ENCODE measurements at regions of chr12 and their contacts with region 1.

Region 1: GRCh38 chr12:15856097-15856982 is 25.8 kb upstream of the STRAP start:
- DNase-seq: peak; percentile 40
- ATAC-seq: peak; percentile 84
- H3K4me3 ChIP-seq: no peak overlapping the region
- H3K27ac ChIP-seq: no peak overlapping the region
- H3K4me1 ChIP-seq: no peaks in the 10 kb centered on the region
- H3K27me3 ChIP-seq: no peaks in the 10 kb centered on the region
- CTCF ChIP-seq: peak; percentile 59 to 82 (median 60); a peak in 4 of 6 replicates
- EP300 ChIP-seq: no peak
- POLR2A ChIP-seq: no peak
- RAD21 ChIP-seq: peak; percentile 98

Region 2: GRCh38 chr12:15276088-15276698 is 580.1 kb before region 1 on chr12:
- CTCF ChIA-PET with region 1: interaction called, 4 read pairs
- POLR2A ChIA-PET with region 1: no interaction called
- RAD21 ChIA-PET with region 1: interaction called, 3 read pairs
- SMC1A ChIA-PET with region 1: interaction called, 3 read pairs
- in situ Hi-C with region 1: loop called (anchors 10 kb)
- intact Hi-C with region 1: loop called (anchors 5 kb)
- DNase-seq: no peak
- ATAC-seq: peak; percentile 29
- H3K4me3 ChIP-seq: no peak overlapping the region
- H3K27ac ChIP-seq: no peak overlapping the region
- H3K4me1 ChIP-seq: no peaks in the 10 kb centered on the region
- H3K27me3 ChIP-seq: no peaks in the 10 kb centered on the region
- CTCF ChIP-seq: peak; percentile 52 to 69 (median 57); a peak in 5 of 6 replicates
- EP300 ChIP-seq: no peak
- POLR2A ChIP-seq: no peak
- RAD21 ChIP-seq: peak; percentile 54

Region 3: GRCh38 chr12:15599266-15600037 is 256.9 kb before region 1 on chr12:
- CTCF ChIA-PET with region 1: interaction called, 478 read pairs
- POLR2A ChIA-PET with region 1: no interaction called
- RAD21 ChIA-PET with region 1: interaction called, 215 read pairs
- SMC1A ChIA-PET with region 1: interaction called, 466 read pairs
- in situ Hi-C with region 1: loop called (anchors 5 kb)
- intact Hi-C with region 1: no loop called
- DNase-seq: no peak
- ATAC-seq: no peak
- H3K4me3 ChIP-seq: no peak overlapping the region
- H3K27ac ChIP-seq: no peak overlapping the region
- H3K4me1 ChIP-seq: no peaks in the 10 kb centered on the region
- H3K27me3 ChIP-seq: no peaks in the 10 kb centered on the region; a peak in 1 of 4 replicates
- CTCF ChIP-seq: no peak
- EP300 ChIP-seq: no peak
- POLR2A ChIP-seq: no peak
- RAD21 ChIP-seq: no peak

Region 4: GRCh38 chr12:15772405-15773018 is 83.8 kb before region 1 on chr12:
- CTCF ChIA-PET with region 1: interaction called, 35 read pairs
- POLR2A ChIA-PET with region 1: interaction called, 9 read pairs
- RAD21 ChIA-PET with region 1: interaction called, 8 read pairs
- SMC1A ChIA-PET with region 1: interaction called, 13 read pairs
- in situ Hi-C with region 1: no loop called
- intact Hi-C with region 1: loop called (anchors 2 kb)
- DNase-seq: no peak
- ATAC-seq: peak; percentile 4
- H3K4me3 ChIP-seq: no peak overlapping the region
- H3K27ac ChIP-seq: no peak overlapping the region
- H3K4me1 ChIP-seq: no peaks in the 10 kb centered on the region
- H3K27me3 ChIP-seq: no peaks in the 10 kb centered on the region
- CTCF ChIP-seq: peak; percentile 22 to 39 (median 30); a peak in 4 of 6 replicates
- EP300 ChIP-seq: no peak
- POLR2A ChIP-seq: no peak
- RAD21 ChIP-seq: peak; percentile 37; the same call in 1 of the 2 replicates

Region 5: DNA sequence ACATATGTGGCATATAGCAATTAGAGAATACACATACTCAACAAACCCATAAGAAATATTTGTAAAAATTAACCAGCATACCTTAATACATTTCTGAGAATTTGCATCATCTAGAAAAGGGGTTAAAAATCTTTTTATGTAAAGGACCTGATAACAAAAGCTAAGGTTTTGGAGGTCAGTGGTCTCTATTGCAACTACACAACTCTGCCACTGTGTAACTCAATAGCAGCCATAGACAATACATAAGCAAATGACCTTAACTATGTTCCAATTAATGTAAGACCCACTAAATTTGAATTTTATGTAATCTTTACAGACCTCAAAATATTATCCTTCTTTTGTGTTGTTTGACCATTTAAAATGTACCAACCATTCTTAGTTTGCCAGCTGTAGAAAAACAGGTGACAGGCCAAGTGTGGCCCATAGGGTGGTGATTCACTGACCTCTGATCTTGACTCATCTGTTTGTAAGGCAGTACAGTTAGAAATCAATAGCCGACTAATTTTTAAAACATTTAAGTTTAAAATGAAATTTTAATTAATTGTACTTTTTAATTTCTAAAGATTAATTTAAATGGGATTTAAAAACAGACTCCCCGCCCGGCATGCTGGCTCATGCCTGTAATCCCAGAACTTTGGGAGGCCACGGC is 59.7 kb before region 1 on chr12:
- CTCF ChIA-PET with region 1: interaction called, 10 read pairs
- POLR2A ChIA-PET with region 1: no interaction called
- RAD21 ChIA-PET with region 1: interaction called, 7 read pairs
- SMC1A ChIA-PET with region 1: interaction called, 9 read pairs
- in situ Hi-C with region 1: no loop called
- intact Hi-C with region 1: no loop called
- DNase-seq: no peak
- ATAC-seq: peak; percentile 43; the same call in 2 of the 3 replicates
- H3K4me3 ChIP-seq: no peak overlapping the region
- H3K27ac ChIP-seq: no peak overlapping the region
- H3K4me1 ChIP-seq: no peaks in the 10 kb centered on the region
- H3K27me3 ChIP-seq: no peaks in the 10 kb centered on the region; a peak in 1 of 4 replicates
- CTCF ChIP-seq: no peak
- EP300 ChIP-seq: no peak
- POLR2A ChIP-seq: no peak
- RAD21 ChIP-seq: no peak

Region 6: DNA sequence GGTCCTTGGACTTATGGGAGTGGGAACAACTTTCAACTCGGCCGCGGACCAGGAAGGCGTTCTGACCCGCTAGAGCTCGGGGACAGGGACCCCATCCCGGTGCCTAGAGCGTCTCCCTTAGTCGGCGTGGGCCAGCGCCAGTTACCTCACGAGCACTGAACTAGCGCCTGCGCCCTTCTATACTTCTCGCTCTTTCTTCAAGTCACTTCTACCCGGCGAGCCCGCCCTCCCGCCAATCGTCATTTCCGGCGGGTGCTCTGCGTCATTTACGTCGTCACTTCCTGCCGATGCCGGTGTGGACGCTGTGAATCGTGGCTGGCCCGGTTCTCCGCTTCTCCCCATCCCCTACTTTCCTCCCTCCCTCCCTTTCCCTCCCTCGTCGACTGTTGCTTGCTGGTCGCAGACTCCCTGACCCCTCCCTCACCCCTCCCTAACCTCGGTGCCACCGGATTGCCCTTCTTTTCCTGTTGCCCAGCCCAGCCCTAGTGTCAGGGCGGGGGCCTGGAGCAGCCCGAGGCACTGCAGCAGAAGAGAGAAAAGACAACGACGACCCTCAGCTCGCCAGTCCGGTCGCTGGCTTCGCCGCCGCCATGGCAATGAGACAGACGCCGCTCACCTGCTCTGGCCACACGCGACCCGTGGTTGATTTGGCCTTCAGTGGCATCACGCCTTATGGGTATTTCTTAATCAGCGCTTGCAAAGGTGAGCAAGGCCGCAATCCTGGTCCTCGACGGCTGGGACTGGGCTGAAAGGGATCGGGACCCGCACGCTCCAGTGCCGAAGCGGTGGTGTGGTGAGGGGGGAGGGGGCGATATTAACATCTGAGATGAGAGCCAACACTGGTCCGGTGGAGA is 26.0 kb after region 1 on chr12 and contains the start of gene STRAP:
- CTCF ChIA-PET with region 1: interaction called, 17 read pairs
- POLR2A ChIA-PET with region 1: no interaction called
- RAD21 ChIA-PET with region 1: no interaction called
- SMC1A ChIA-PET with region 1: interaction called, 4 read pairs
- in situ Hi-C with region 1: no loop called
- intact Hi-C with region 1: no loop called
- DNase-seq: peak; percentile 88
- ATAC-seq: peak; percentile 93
- H3K4me3 ChIP-seq: peak within 1 kb of the TSS; percentile 97
- H3K27ac ChIP-seq: peak within 1 kb of the TSS; percentile 90
- H3K4me1 ChIP-seq: peaks cover 4% of the 10 kb centered on the region; the same call in 1 of the 2 replicates
- H3K27me3 ChIP-seq: no peaks in the 10 kb centered on the region
- CTCF ChIP-seq: no peak
- EP300 ChIP-seq: no peak
- POLR2A ChIP-seq: peak; percentile 94
- RAD21 ChIP-seq: no peak
- polyA plus RNA-seq, gene STRAP: 102 to 227 TPM

Region 7: GRCh38 chr12:16347391-16348298 is 491.3 kb after region 1 on chr12 and contains the start of gene MGST1:
- CTCF ChIA-PET with region 1: no interaction called
- POLR2A ChIA-PET with region 1: no interaction called
- RAD21 ChIA-PET with region 1: no interaction called
- SMC1A ChIA-PET with region 1: no interaction called
- in situ Hi-C with region 1: no loop called
- intact Hi-C with region 1: no loop called
- DNase-seq: peak; percentile 11
- ATAC-seq: peak; percentile 81
- H3K4me3 ChIP-seq: no peak within 1 kb of the TSS
- H3K27ac ChIP-seq: peak within 1 kb of the TSS; percentile 18; the same call in 1 of the 2 replicates
- H3K4me1 ChIP-seq: no peaks in the 10 kb centered on the region
- H3K27me3 ChIP-seq: no peaks in the 10 kb centered on the region
- CTCF ChIP-seq: no peak
- EP300 ChIP-seq: no peak
- POLR2A ChIP-seq: peak; percentile 46; the same call in 1 of the 2 replicates
- RAD21 ChIP-seq: no peak
- polyA plus RNA-seq, gene MGST1: 219 to 237 TPM